T-cell (primary cell): ENCODE measurements at regions of chr15 and their contacts with region 1.

Region 1: DNA sequence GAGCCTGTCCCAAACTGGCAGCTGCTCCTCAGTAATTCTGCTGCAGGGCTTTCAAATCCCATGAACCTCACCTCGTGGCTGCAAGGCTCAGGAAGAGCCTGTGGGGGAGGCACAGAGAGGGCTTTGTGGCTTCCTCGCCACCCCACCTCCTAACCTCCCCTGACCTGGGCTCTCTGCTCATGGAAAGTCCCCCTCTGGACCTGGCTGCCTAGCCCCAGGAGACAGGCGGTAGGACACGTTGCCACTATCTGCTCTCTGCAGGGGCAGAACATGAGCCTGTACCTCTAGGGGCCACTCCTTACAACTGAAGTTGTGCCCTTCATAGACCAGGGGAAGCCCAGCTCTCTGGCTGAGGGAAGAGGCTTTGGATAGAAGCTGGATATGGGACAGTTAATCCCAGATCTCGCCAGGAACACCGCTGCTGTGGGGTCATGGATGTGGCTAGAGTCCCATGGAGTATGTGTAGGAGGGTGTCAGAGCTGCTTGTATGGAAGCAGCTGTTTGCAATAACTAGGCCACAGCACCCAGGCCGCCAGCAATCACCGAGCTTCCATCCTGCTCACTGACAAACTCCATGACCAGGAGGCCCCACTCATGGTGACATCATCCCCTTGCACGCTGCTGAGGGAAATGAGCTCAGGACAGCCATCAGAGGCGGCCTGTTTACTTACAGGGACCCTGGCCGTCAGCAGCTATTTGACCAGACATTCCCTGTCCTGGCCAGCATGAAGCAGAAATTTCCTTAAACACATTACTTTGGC is 34.0 kb upstream of the CILP start:
- DNase-seq: no peak
- ATAC-seq: no peak
- H3K4me3 ChIP-seq: no peak overlapping the region
- H3K4me3 Mint-ChIP-seq: no peak overlapping the region
- H3K27ac ChIP-seq: no peak overlapping the region
- H3K27ac Mint-ChIP-seq: no peak overlapping the region
- H3K4me1 ChIP-seq: peaks cover 0 to 4% of the 10 kb centered on the region in 2 experiments
- H3K4me1 Mint-ChIP-seq: peaks cover 0 to 3% (median 2%) of the 10 kb centered on the region in 3 donors
- H3K27me3 ChIP-seq: no peaks in the 10 kb centered on the region
- H3K27me3 Mint-ChIP-seq: no peaks in the 10 kb centered on the region

Region 2: DNA sequence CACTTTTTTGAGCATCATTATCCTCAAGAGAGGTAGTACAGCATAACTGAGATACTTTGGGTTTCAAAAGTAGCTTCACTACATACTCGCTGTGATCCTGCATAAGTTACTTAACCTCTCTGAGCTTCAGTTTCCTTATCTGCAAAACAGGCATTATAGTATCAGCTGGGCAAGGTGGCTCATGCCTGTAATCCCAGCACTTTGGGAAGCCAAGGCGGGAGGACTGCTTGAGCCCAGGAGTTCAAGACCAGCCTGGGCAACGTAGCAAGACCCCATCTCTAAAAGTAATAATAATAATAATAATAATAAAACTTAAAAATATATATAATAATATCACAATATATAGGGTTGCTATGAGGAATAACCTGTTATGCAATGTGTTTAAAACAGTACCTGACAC is 1162.5 kb before region 1 on chr15:
- CTCF ChIA-PET with region 1: interaction called in 1 of 2 experiments, 12 read pairs
- POLR2A ChIA-PET with region 1: no interaction called
- DNase-seq: no peak
- ATAC-seq: no peak
- H3K4me3 ChIP-seq: no peak overlapping the region
- H3K4me3 Mint-ChIP-seq: no peak overlapping the region
- H3K27ac ChIP-seq: no peak overlapping the region
- H3K27ac Mint-ChIP-seq: no peak overlapping the region
- H3K4me1 ChIP-seq: no peaks in the 10 kb centered on the region
- H3K4me1 Mint-ChIP-seq: peaks cover 0 to 2% (median 0%) of the 10 kb centered on the region in 3 donors
- H3K27me3 ChIP-seq: no peaks in the 10 kb centered on the region
- H3K27me3 Mint-ChIP-seq: no peaks in the 10 kb centered on the region

Region 3: DNA sequence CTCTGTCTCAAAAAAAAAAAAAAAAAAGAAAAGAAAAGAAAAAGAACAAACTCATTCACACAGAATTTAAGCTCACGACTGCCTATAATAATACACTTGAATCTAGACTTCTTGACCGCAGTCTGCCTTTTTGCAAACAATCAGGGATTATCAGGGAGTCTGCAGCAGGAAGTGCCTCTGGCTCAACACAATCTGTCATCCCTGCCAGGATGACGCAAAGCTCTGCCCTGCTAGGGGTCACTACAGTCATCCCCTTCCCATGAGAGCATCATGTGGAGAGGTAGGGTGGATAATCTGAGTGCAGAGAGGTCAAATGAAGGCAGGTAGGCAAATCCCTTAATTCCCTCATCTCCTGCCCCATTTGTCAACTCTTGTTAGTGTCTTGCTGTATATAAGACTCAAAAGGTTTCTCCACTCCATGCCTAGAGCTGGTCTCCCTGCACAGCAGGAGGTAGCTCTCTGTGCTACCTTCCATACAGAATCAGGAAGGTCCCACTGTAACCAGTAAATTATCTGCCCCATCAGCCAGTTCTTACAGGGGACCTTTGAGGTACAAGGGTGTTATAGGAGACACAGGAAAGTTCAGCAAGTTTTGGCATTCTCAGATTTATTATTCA is 134.5 kb before region 1 on chr15:
- CTCF ChIA-PET with region 1: no interaction called
- POLR2A ChIA-PET with region 1: no interaction called
- DNase-seq: no peak
- ATAC-seq: no peak
- H3K4me3 ChIP-seq: no peak overlapping the region
- H3K4me3 Mint-ChIP-seq: no peak overlapping the region
- H3K27ac ChIP-seq: no peak overlapping the region
- H3K27ac Mint-ChIP-seq: no peak overlapping the region
- H3K4me1 ChIP-seq: no peaks in the 10 kb centered on the region
- H3K4me1 Mint-ChIP-seq: no peaks in the 10 kb centered on the region
- H3K27me3 ChIP-seq: no peaks in the 10 kb centered on the region
- H3K27me3 Mint-ChIP-seq: no peaks in the 10 kb centered on the region

Region 4: GRCh38 chr15:65212097-65212496 is 33.2 kb before region 1 on chr15:
- CTCF ChIA-PET with region 1: no interaction called
- POLR2A ChIA-PET with region 1: no interaction called
- DNase-seq: peak in 28 of 35 experiments; percentile 3 to 50 (median 14)
- ATAC-seq: peak in 2 of 4 experiments; percentile 44 to 69
- H3K4me3 ChIP-seq: no peak overlapping the region
- H3K4me3 Mint-ChIP-seq: no peak overlapping the region
- H3K27ac ChIP-seq: no peak overlapping the region
- H3K27ac Mint-ChIP-seq: no peak overlapping the region
- H3K4me1 ChIP-seq: no peaks in the 10 kb centered on the region
- H3K4me1 Mint-ChIP-seq: no peaks in the 10 kb centered on the region
- H3K27me3 ChIP-seq: peaks cover 0 to 11% of the 10 kb centered on the region in 2 experiments
- H3K27me3 Mint-ChIP-seq: no peaks in the 10 kb centered on the region